Activated B cell treated with CpG ODN at 0.5 μM for 24 hours (primary cell): ENCODE measurements at regions of chr19 and their contacts with region 1.

Region 1: DNA sequence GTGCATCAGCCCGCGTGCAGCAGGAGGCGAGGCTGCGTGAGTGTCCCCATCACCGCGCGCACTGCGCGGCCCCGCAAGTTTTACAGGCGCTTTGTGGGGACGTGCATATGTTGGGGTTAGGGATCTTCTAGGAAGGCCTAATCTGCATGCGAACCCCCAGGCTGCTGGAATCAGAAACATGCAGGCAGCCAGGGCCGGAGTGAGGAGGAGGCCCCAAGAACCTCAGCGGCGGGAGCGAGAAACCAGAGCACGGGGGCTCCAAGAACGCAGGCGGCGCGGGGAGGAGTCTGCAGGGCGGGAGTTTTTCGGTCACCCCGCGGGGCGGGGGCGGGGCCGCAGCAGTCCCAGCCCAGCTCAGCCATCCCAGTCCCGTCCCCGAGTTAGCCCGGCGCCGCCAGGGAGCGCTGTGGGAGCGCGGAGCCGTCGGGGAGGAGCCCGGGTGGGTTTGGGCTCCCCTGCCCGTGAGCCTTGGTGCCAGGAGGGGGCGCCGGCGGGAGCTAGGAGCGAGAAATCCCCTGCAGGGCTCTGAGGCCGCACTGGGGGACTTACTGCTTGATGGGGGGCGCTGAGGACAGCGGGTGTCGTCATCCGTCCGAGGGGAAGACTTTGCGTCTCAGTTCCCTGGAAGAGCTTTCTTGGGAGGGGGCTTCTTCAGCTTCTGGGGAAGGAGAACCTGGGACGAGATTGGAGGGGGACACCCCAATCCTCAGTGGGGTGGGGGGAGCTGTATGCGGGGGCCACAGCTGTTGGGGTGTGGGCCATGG is 933 bp upstream of the NRTN start:
- DNase-seq: peak; percentile 83
- ATAC-seq: peak; percentile 91
- H3K4me3 Mint-ChIP-seq: peak overlapping the region; percentile 67
- H3K27ac Mint-ChIP-seq: peak overlapping the region; percentile 18
- H3K4me1 Mint-ChIP-seq: peaks cover 24% of the 10 kb centered on the region
- H3K27me3 Mint-ChIP-seq: peaks cover 24% of the 10 kb centered on the region
- CTCF ChIP-seq: no peak

Region 2: GRCh38 chr19:5827891-5828660 is 24.1 kb after region 1 on chr19:
- CTCF ChIA-PET with region 1: interaction called, 9 read pairs
- POLR2A ChIA-PET with region 1: interaction called, 11 read pairs
- intact Hi-C with region 1: loop called (anchors 1 kb)
- DNase-seq: peak; percentile 78
- ATAC-seq: peak; percentile 78
- H3K4me3 Mint-ChIP-seq: peak overlapping the region; percentile 85
- H3K27ac Mint-ChIP-seq: peak overlapping the region; percentile 75
- H3K4me1 Mint-ChIP-seq: peaks cover 18% of the 10 kb centered on the region
- H3K27me3 Mint-ChIP-seq: peaks cover 11% of the 10 kb centered on the region
- CTCF ChIP-seq: no peak

Region 3: GRCh38 chr19:5880604-5881078 is 76.7 kb after region 1 on chr19:
- CTCF ChIA-PET with region 1: no interaction called
- POLR2A ChIA-PET with region 1: interaction called, 13 read pairs
- intact Hi-C with region 1: no loop called
- DNase-seq: no peak
- ATAC-seq: no peak
- H3K4me3 Mint-ChIP-seq: no peak overlapping the region
- H3K27ac Mint-ChIP-seq: no peak overlapping the region
- H3K4me1 Mint-ChIP-seq: peaks cover 2% of the 10 kb centered on the region
- H3K27me3 Mint-ChIP-seq: peaks cover 10% of the 10 kb centered on the region
- CTCF ChIP-seq: no peak

Region 4: DNA sequence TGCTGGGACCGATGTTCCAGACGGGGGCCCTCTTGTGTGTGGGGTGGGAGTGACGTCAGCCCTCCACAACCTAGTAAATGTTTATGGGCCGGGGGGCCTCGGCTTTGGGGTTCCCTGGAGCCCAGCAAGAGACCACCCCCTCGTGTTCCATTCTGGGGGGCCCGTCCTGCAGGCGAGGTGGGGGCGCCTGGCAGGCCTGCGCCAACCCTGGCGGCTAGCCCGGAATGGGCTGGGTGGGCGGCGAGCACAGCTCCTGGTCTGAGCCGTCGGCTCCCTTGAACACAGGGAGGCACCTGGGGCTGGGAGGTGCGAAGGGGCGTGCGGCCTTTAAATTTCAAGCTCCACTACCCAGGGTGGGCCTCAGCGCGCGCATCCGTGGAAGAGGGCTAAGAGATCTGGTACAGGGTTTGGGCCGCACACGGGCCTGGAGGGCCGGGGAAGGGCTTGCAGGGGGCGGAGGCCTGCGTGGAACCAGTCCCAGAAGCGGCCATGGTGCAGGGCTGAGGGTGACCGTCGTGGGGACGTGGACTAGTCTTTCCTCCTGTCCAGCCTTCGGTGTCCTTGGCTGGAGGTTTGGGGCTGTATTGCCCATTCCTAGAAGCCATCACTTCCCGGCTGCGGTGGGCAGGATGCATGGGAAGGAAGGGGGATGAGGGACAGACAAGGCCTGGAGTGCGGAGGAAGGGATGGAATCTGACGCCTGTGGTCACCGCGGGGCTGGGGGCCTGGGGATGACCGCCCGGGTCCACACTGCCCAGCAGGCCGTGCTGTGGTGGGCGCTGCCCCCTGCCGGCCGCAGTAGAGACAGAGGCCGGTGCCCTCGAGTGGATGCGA is 88.2 kb after region 1 on chr19:
- CTCF ChIA-PET with region 1: no interaction called
- POLR2A ChIA-PET with region 1: no interaction called
- intact Hi-C with region 1: loop called (anchors 1 kb)
- DNase-seq: no peak
- ATAC-seq: peak; percentile 27
- H3K4me3 Mint-ChIP-seq: no peak overlapping the region
- H3K27ac Mint-ChIP-seq: no peak overlapping the region
- H3K4me1 Mint-ChIP-seq: no peaks in the 10 kb centered on the region
- H3K27me3 Mint-ChIP-seq: peaks cover 6% of the 10 kb centered on the region
- CTCF ChIP-seq: no peak

Region 5: DNA sequence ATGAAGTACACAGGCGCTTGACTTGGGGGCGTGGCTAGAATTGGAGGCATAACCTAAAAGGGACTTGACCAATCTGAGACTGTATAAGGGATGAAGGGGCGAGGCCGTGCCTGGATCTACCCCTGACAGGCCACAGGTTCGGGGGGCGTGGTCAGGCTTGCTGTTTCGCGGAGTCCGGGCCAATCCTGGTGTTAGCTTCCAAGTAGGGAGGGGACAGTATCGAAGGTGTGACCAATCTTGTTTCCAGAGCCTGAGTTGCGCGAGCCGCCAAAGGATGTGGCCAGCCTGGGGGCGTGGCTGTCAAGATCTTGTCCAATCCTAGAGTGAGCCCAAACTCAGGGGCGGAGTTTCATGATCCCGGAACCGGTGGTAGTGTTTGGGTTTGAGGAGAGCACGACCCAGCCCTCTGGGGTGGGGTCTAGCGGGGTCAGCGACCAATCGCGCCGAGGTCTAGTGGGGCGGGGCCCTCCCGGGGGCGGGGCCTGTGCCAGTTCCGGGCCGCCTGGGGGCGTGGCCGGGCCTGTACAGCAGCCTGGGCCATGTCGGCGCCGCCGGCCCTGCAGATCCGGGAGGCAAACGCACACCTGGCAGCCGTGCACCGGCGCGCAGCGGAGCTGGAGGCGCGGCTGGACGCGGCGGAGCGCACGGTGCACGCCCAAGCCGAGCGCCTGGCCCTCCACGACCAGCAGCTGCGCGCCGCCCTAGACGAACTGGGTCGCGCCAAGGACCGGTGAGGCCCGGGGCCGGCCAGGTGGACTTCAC is 100.6 kb after region 1 on chr19 and contains the start of gene VMAC:
- CTCF ChIA-PET with region 1: interaction called, 3 read pairs
- POLR2A ChIA-PET with region 1: interaction called, 5 read pairs
- intact Hi-C with region 1: loop called (anchors 1 kb)
- DNase-seq: peak; percentile 100
- ATAC-seq: peak; percentile 78
- H3K4me3 Mint-ChIP-seq: peak within 1 kb of the TSS; percentile 95
- H3K27ac Mint-ChIP-seq: peak within 1 kb of the TSS; percentile 98
- H3K4me1 Mint-ChIP-seq: peaks cover 38% of the 10 kb centered on the region
- H3K27me3 Mint-ChIP-seq: no peaks in the 10 kb centered on the region
- CTCF ChIP-seq: no peak
- total RNA-seq, gene VMAC: 11.2 and 13.3 TPM in 2 replicates

Region 6: GRCh38 chr19:6021878-6022569 is 218.1 kb after region 1 on chr19:
- CTCF ChIA-PET with region 1: interaction called, 21 read pairs
- POLR2A ChIA-PET with region 1: no interaction called
- intact Hi-C with region 1: loop called (anchors 1 kb)
- DNase-seq: peak; percentile 50
- ATAC-seq: peak; percentile 97
- H3K4me3 Mint-ChIP-seq: no peak overlapping the region
- H3K27ac Mint-ChIP-seq: no peak overlapping the region
- H3K4me1 Mint-ChIP-seq: no peaks in the 10 kb centered on the region
- H3K27me3 Mint-ChIP-seq: peaks cover 3% of the 10 kb centered on the region
- CTCF ChIP-seq: peak; percentile 25